Mucosa of descending colon (tissue), 3 donors: ENCODE measurements at regions of chr1 and their contacts with region 1.

Region 1: GRCh38 chr1:113694910-113695309 is 64.4 kb downstream of the PHTF1 start:
- DNase-seq: no peak
- ATAC-seq: no peak
- H3K4me3 ChIP-seq: no peak overlapping the region
- H3K4me1 ChIP-seq: no peaks in the 10 kb centered on the region
- CTCF ChIP-seq: no peak

Region 2: GRCh38 chr1:113133038-113133437 is 561.9 kb before region 1 on chr1:
- intact Hi-C with region 1: loop called in 1 of 2 experiments (anchors 5 kb)
- DNase-seq: no peak
- ATAC-seq: no peak
- H3K4me3 ChIP-seq: no peak overlapping the region
- H3K4me1 ChIP-seq: no peaks in the 10 kb centered on the region
- CTCF ChIP-seq: no peak